Calu3 (cell line): ENCODE measurements at regions of chr4 and their contacts with region 1.

Region 1: GRCh38 chr4:185654306-185654987 is 119.1 kb upstream of the PDLIM3 start:
- DNase-seq: no peak
- H3K4me3 Mint-ChIP-seq: no peak overlapping the region
- H3K27ac Mint-ChIP-seq: no peak overlapping the region
- H3K4me1 Mint-ChIP-seq: peaks cover 27% of the 10 kb centered on the region
- H3K27me3 Mint-ChIP-seq: no peaks in the 10 kb centered on the region
- CTCF ChIP-seq: no peak

Region 2: DNA sequence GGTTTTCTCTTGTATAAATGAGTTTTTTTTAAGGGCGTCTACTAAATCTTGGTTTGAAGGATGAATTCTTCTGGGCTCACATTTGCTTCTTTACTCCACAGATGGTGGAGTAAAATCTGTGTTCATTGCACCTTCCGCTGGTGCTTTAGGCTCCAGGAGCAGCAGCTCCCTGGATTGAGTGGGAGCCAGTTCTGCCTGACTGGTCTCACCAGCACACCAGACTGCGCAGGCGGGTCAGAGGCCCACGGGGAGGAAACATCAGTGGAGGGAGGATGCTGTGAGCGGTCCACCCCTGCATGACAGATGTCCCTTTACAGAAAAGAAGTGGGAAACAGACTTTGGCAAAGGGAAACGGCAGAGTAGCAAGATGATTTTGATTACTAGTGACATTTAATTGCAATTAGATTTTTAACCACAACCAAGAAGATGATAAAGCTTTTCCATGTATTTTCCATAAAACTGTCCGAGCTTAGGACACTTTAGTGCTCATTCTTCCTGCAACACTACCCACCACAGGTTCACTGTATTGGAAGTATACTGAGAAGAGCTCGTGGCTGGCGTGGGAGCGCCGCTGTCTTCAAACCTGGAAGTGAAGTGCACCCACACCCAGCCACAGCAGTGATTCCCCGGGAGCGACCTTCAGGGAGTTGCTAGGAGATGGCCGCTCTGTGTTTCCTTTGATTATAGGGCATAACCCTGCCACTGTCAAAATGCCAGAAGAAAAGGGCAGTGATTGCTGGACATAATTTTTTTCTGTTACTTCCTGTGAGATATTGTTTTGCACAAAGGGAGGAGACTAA is 62.3 kb after region 1 on chr4:
- CTCF ChIA-PET with region 1: no interaction called
- intact Hi-C with region 1: loop called (anchors 5 kb)
- DNase-seq: peak; percentile 17
- H3K4me3 Mint-ChIP-seq: peak overlapping the region; percentile 55
- H3K27ac Mint-ChIP-seq: peak overlapping the region; percentile 73
- H3K4me1 Mint-ChIP-seq: peaks cover 74% of the 10 kb centered on the region
- H3K27me3 Mint-ChIP-seq: no peaks in the 10 kb centered on the region
- CTCF ChIP-seq: no peak

Region 3: DNA sequence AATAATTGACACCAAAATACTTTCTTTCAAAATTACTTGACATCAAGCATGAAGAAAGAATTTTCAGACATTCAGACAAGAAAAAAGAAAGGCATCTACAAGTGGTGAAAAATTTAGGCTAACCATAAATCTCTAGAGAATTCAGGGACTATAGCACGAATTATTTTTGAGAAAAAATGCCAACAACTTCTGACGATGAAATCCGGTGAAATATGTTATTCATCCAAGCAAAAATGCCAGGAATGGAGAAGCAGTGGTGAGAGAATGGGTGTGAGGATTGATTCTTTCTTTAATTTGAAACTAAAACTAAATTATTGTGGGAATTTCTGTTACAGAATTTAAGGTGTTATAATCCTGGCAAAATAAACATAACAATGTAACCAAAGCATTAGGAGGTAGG is 227.0 kb after region 1 on chr4:
- CTCF ChIA-PET with region 1: no interaction called
- intact Hi-C with region 1: loop called (anchors 5 kb)
- DNase-seq: no peak
- H3K4me3 Mint-ChIP-seq: no peak overlapping the region
- H3K27ac Mint-ChIP-seq: peak overlapping the region; percentile 5
- H3K4me1 Mint-ChIP-seq: peaks cover 17% of the 10 kb centered on the region
- H3K27me3 Mint-ChIP-seq: no peaks in the 10 kb centered on the region
- CTCF ChIP-seq: no peak